Activated CD8-positive, alpha-beta T cell treated with anti-CD3 and anti-CD28 coated beads, Interleukin-2, amount 10 ng/mL, durations not matched to agents 7 days and 5 days (primary cell): ENCODE measurements at regions of chr3 and their contacts with region 1.

Region 1: GRCh38 chr3:32428092-32429068 is 36.7 kb downstream of the CMTM7 start:
- DNase-seq: peak; percentile 69
- ATAC-seq: peak; percentile 64
- H3K4me3 Mint-ChIP-seq: peak overlapping the region; percentile 69
- H3K27ac Mint-ChIP-seq: peak overlapping the region; percentile 91
- H3K4me1 Mint-ChIP-seq: peaks cover 95% of the 10 kb centered on the region
- H3K27me3 Mint-ChIP-seq: no peaks in the 10 kb centered on the region

Region 2: GRCh38 chr3:32414520-32415202 is 13.7 kb before region 1 on chr3:
- CTCF ChIA-PET with region 1: interaction called, 68 read pairs
- POLR2A ChIA-PET with region 1: interaction called, 26 read pairs
- DNase-seq: peak; percentile 73
- ATAC-seq: peak; percentile 91
- H3K4me3 Mint-ChIP-seq: peak overlapping the region; percentile 40
- H3K27ac Mint-ChIP-seq: peak overlapping the region; percentile 83
- H3K4me1 Mint-ChIP-seq: peaks cover 66% of the 10 kb centered on the region
- H3K27me3 Mint-ChIP-seq: no peaks in the 10 kb centered on the region

Region 3: GRCh38 chr3:32438596-32439344 is 10.4 kb after region 1 on chr3:
- CTCF ChIA-PET with region 1: interaction called, 36 read pairs
- POLR2A ChIA-PET with region 1: interaction called, 34 read pairs
- DNase-seq: peak; percentile 21
- ATAC-seq: peak; percentile 41
- H3K4me3 Mint-ChIP-seq: no peak overlapping the region
- H3K27ac Mint-ChIP-seq: peak overlapping the region; percentile 63
- H3K4me1 Mint-ChIP-seq: peaks cover 59% of the 10 kb centered on the region
- H3K27me3 Mint-ChIP-seq: no peaks in the 10 kb centered on the region

Region 4: DNA sequence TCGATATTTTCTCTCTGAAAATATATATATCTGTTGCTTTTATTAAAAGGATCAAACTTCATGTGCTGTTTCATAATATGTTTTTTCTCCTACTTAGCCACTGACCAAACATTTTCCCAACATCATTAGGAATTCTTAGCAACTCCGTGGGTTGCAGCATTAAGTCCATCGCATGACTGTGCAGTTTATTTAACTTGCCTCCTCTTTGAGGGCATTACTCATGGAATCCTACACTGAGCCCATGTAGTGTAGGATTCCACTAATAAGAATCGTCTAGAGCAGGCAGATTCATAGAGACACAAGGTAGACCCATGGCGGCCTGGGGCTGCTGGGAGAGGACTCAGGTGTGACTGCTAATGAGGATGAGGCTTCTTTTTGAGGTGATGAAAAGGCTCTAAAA is 25.0 kb after region 1 on chr3:
- CTCF ChIA-PET with region 1: interaction called, 24 read pairs
- POLR2A ChIA-PET with region 1: interaction called, 11 read pairs
- DNase-seq: no peak
- ATAC-seq: no peak
- H3K4me3 Mint-ChIP-seq: no peak overlapping the region
- H3K27ac Mint-ChIP-seq: no peak overlapping the region
- H3K4me1 Mint-ChIP-seq: peaks cover 54% of the 10 kb centered on the region
- H3K27me3 Mint-ChIP-seq: no peaks in the 10 kb centered on the region

Region 5: DNA sequence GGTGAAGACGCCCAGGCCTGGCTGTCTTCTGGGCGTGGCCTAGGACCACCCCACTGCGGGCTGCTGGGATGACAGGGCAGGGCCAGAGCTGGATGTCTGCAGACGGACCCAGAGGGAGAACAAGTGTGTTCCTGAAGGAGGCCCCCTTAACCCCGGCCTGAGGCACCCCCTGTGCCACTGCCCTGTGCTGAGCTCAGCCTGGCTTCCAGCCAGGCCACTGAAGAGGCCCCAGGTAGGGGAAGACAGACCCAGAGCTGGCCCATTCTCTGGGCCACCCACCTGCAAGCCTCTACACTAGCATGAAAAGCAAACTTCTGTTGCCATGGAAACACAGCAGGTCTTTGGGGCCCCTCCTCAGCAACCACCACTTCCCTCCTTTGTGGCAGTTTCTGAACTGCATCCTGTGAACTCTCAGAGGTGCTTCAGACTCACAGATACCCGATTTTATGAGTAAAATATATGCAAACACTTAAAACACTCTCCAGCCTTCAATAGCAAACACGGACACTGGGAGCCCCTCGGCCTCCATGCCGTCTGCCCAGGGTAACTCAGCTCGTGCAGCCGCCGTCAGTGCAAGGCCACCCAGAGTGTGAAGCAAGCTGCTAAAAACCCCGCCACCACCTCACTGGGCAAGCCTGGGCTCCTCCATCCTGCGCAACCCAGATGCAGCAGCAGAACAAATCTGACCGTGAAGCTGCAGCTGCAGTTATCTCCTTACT is 31.8 kb after region 1 on chr3:
- CTCF ChIA-PET with region 1: interaction called, 24 read pairs
- POLR2A ChIA-PET with region 1: interaction called, 36 read pairs
- DNase-seq: peak; percentile 92
- ATAC-seq: peak; percentile 85
- H3K4me3 Mint-ChIP-seq: peak overlapping the region; percentile 80
- H3K27ac Mint-ChIP-seq: no peak overlapping the region
- H3K4me1 Mint-ChIP-seq: peaks cover 33% of the 10 kb centered on the region
- H3K27me3 Mint-ChIP-seq: no peaks in the 10 kb centered on the region